Transverse colon (tissue), 4 donors: ENCODE measurements at regions of chr16 and their contacts with region 1.

Region 1: DNA sequence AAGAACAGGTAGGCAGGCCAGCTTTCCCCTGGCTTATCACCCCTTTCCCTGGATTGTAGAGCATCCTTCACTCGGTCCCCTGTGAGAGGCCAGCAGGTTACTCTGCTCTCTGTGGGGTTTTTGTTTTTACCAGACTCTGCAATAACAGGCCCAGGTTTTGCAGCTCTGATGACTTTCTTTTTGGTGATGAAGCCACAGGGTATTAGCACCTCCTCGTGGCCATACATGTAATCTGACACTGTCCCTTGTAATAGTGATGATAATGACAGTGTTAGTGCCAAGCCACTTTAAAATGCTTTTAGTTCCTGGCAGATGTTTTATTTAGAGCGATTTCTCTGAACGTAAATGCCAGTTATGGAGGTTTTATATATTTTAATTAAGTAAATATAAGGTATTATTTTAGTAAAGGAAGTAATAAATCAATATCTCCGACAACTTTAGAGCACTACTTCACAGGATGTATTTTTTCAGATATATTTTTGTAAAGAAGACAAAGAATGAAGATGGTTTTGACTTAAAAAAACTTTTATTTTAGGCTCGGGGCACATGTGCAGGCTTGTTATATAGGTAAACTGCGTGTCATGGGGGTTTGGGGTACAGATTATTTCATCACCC is 38.0 kb upstream of the CPHXL start:
- DNase-seq: peak; percentile 61
- H3K4me3 ChIP-seq: no peak overlapping the region
- H3K27ac ChIP-seq: no peak overlapping the region
- H3K4me1 ChIP-seq: peaks cover 0 to 3% (median 0%) of the 10 kb centered on the region in 4 donors
- H3K27me3 ChIP-seq: peaks cover 9% of the 10 kb centered on the region
- CTCF ChIP-seq: peak; percentile 71 to 80 (median 77)
- EP300 ChIP-seq: no peak
- POLR2A ChIP-seq: no peak

Region 2: DNA sequence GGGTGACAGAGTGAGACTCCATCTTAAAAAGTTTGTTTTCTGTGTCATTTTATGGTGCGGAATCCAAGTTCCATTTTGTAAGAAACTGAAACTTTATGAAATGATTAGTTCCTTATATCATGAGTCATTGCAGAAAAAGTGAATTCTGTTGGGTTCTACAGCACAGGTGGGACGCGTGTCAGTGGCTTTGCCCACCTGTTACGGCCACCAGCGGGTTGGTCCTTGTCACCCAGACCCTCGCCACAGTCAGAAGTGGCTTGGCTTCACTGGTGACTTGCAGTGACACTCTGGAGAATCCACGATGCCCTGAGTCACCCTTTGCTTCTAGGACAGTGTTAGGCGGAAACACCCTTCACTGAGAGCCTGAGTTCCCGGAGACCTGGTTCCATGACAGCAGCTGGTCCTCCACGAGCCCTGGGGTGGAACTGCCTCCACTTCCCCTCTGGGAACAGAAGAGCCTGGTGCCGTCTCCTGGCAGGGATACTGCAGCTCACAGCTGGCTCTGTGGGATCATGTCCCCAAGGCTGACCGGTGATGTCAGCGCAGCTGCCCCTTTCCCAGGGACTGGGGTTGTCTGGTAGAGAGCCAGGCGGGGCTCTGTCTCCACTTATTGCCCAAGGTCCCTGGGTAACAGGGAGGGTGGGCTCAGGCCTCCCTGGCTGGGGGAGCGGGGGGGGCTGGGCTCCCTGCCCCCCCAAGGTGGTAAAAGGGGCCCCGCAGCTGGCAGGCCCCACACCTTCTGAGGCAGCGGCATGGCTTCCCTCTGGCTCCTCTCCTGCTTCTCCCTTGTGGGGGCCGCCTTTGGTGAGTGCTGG is 545.8 kb before region 1 on chr16 and contains the start of gene CTRB1:
- in situ Hi-C with region 1: loop called in 1 of 4 experiments (anchors 25 kb)
- intact Hi-C with region 1: no loop called
- DNase-seq: no peak
- H3K4me3 ChIP-seq: no peak within 1 kb of the TSS
- H3K27ac ChIP-seq: no peak within 1 kb of the TSS
- H3K4me1 ChIP-seq: no peaks in the 10 kb centered on the region
- H3K27me3 ChIP-seq: no peaks in the 10 kb centered on the region
- CTCF ChIP-seq: no peak
- EP300 ChIP-seq: no peak
- POLR2A ChIP-seq: no peak
- total RNA-seq, gene CTRB1: not detected

Region 3: DNA sequence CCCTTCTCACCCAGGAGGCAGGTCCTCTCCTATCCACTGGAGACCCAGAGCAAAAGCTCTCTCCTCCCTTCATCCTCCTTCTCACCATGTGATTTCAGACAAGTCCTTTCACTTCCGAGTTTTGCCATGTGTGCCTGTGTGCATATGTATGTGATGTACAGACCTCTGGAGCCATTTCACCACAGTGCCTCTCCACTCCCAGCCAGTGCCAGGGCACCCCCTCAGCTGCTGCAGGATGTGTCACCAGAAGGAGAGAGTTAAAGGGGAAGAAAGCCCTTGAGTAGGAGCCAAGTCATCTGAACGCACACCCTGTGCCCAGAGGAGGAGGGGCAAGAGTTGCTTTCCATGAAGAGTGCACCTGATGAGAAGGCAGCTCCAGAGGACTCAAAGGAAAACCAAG is 286.2 kb before region 1 on chr16:
- in situ Hi-C with region 1: loop called (anchors 10 to 25 kb)
- intact Hi-C with region 1: loop called (anchors 5 kb)
- DNase-seq: no peak
- H3K4me3 ChIP-seq: no peak overlapping the region
- H3K27ac ChIP-seq: no peak overlapping the region
- H3K4me1 ChIP-seq: no peaks in the 10 kb centered on the region
- H3K27me3 ChIP-seq: no peaks in the 10 kb centered on the region
- CTCF ChIP-seq: no peak
- EP300 ChIP-seq: no peak
- POLR2A ChIP-seq: no peak

Region 4: DNA sequence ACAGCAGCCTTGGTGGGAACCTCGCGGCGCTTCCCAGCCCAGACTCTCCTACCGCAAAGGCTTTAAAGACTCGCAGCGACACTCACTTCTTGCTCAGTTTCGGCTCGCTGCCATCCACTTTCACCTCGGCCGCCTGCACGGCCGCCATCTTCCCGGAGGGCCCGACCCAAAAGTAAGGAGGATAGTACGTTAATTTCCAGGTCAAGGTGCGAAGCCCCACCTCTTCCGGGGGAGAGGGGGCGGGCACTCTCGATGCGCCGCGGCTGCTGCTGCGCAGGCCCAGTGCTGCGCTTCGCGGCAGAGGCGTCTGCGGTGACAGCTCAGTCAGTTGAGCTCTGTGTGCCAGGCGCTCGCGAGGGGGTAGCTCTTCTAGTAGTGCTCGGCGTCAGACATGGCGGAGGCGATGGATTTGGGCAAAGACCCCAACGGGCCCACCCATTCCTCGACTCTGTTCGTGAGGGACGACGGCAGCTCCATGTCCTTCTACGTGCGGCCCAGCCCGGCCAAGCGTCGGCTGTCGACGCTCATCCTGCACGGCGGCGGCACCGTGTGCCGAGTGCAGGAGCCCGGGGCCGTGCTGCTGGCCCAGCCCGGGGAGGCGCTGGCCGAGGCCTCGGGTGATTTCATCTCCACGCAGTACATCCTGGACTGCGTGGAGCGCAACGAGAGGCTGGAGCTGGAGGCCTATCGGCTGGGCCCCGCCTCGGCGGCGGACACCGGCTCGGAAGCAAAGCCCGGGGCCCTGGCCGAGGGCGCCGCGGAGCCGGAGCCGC is 116.6 kb before region 1 on chr16 and contains the starts of genes KARS1 and TERF2IP:
- in situ Hi-C with region 1: loop called in 2 of 4 experiments (anchors 5 to 25 kb)
- intact Hi-C with region 1: no loop called
- DNase-seq: peak; percentile 96
- H3K4me3 ChIP-seq: peak within 1 kb of the TSS; percentile 86 to 100 (median 97)
- H3K27ac ChIP-seq: peak within 1 kb of the TSS; percentile 97 to 99 (median 98)
- H3K4me1 ChIP-seq: peaks cover 25 to 58% (median 41%) of the 10 kb centered on the region in 4 donors
- H3K27me3 ChIP-seq: no peaks in the 10 kb centered on the region
- CTCF ChIP-seq: peak in 1 of 5 experiments; percentile 3
- EP300 ChIP-seq: no peak
- POLR2A ChIP-seq: peak; percentile 98
- total RNA-seq, gene KARS1: 15.3 to 86.5 (median 76.4) TPM
- total RNA-seq, gene TERF2IP: 20.9 to 50.0 (median 36.3) TPM

Region 5: DNA sequence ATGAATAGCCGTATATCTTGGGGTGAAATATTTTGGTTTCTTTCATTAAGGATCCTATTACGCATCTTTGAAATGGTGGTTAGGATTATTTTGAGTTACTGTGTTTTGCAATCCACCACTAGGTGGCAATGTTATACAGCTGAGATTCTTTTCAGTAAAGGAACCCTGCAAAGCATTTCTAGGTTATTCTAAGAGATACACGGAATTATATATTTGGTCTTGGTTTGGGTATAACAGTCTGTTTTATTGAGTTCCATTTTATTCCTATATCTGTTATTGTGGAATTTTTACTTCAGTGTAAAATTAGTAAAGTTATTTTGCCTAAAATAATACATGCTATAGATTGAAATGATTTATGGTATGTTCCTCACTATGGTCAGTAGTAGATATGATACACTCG is 25.0 kb after region 1 on chr16:
- in situ Hi-C with region 1: no loop called
- intact Hi-C with region 1: no loop called
- DNase-seq: no peak
- H3K4me3 ChIP-seq: no peak overlapping the region
- H3K27ac ChIP-seq: no peak overlapping the region
- H3K4me1 ChIP-seq: no peaks in the 10 kb centered on the region
- H3K27me3 ChIP-seq: peaks cover 16% of the 10 kb centered on the region
- CTCF ChIP-seq: peak; percentile 72 to 87 (median 84)
- EP300 ChIP-seq: no peak
- POLR2A ChIP-seq: no peak